AG04449 (cell line): ENCODE measurements at regions of chr10 and their contacts with region 1.

Region 1: GRCh38 chr10:30241422-30242110 is 107.5 kb downstream of the MTPAP start:
- DNase-seq: no peak
- H3K4me3 ChIP-seq: no peak overlapping the region
- CTCF ChIP-seq: no peak

Region 2: DNA sequence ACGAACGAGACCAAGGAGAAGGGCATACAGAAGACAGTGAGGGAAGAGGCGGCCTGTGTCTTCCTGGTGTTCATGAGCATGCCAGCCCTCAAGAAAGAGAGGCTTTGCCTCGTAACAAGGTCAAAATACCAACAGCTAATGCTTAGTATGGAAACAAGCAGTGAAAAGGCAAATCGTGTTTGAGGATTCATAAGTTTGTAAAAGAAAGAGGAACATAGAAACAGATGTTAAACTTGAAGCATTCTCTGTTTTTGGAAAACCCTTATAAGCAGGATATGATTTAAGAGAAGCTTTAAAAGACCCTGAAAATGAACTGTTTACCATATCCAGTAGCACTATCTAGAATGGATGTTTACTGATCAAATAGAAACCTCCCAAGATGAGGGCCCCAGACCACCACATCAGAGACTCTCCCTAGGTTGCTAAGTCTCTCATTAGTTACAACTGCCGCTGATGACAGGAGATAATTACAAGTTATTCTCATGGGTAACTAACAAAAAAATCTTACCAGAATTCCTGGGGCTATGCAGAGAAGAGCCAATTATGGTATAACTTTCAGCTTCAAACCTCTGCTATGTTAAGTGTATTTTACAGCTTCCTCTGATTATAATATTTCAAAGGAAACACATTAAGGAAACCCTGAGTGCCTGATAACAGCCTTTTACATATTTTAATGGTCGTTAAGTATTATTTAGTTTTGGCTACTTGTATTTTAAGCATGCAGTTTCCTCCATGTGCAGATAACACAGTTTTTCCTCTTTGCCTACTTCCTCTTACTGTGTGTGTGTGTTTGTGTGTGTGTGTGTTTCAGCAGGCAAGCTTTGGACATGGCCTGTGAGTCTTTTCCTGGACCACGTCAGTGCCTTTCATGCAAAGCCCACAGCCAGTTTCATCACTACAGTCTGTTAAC is 200.1 kb before region 1 on chr10:
- CTCF ChIA-PET with region 1: interaction called, 17 read pairs
- POLR2A ChIA-PET with region 1: no interaction called
- DNase-seq: no peak
- H3K4me3 ChIP-seq: no peak overlapping the region
- CTCF ChIP-seq: no peak

Region 3: GRCh38 chr10:30048768-30049517 is 192.6 kb before region 1 on chr10:
- CTCF ChIA-PET with region 1: interaction called, 14 read pairs
- POLR2A ChIA-PET with region 1: no interaction called
- DNase-seq: no peak
- H3K4me3 ChIP-seq: no peak overlapping the region
- CTCF ChIP-seq: no peak

Region 4: GRCh38 chr10:30231071-30231652 is 10.4 kb before region 1 on chr10:
- CTCF ChIA-PET with region 1: interaction called, 23 read pairs
- POLR2A ChIA-PET with region 1: no interaction called
- DNase-seq: no peak
- H3K4me3 ChIP-seq: no peak overlapping the region
- CTCF ChIP-seq: no peak

Region 5: GRCh38 chr10:30368065-30368718 is 126.6 kb after region 1 on chr10:
- CTCF ChIA-PET with region 1: no interaction called
- POLR2A ChIA-PET with region 1: no interaction called
- DNase-seq: no peak
- H3K4me3 ChIP-seq: no peak overlapping the region
- CTCF ChIP-seq: no peak

Region 6: DNA sequence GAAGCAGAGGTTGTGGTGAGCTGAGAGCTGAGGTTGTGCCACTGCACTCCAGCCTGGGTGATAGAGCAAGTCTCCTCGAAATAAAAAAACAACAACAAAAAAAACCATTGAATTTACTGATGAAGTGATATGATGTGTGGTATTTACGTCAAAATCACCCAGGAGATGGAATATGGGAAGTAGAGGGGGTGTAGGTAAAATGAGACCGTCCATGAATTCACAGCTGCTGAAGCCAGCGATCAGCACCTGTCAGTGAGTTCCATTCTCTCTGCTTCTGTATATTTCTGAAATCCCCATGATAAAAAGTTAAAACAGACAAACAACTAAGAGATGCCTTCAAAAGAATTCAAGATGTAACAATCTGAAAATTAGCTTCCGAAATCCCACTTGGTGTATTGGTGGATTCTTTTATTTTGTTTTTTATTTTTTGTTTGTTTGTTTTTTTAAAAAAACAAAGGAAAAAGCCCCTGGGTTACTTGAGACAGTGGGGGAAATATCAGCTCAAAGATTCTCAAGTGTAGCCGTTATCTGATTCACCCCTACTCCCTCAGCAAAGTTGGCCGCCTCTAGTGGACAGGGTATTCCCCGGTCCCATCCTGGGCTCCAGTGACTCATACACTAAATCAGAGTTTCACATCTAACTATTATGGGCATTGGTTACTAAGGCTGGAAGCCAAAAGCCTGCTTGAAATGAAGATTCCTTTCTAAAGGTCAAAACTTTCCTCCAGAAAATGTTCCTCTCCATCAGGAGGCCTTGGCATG is 268.8 kb after region 1 on chr10:
- CTCF ChIA-PET with region 1: no interaction called
- POLR2A ChIA-PET with region 1: no interaction called
- DNase-seq: no peak
- H3K4me3 ChIP-seq: no peak overlapping the region
- CTCF ChIP-seq: peak; percentile 14